Activated B cell treated with CpG ODN at 0.5 μM for 24 hours (primary cell): ENCODE measurements at regions of chrX and their contacts with region 1.

Region 1: DNA sequence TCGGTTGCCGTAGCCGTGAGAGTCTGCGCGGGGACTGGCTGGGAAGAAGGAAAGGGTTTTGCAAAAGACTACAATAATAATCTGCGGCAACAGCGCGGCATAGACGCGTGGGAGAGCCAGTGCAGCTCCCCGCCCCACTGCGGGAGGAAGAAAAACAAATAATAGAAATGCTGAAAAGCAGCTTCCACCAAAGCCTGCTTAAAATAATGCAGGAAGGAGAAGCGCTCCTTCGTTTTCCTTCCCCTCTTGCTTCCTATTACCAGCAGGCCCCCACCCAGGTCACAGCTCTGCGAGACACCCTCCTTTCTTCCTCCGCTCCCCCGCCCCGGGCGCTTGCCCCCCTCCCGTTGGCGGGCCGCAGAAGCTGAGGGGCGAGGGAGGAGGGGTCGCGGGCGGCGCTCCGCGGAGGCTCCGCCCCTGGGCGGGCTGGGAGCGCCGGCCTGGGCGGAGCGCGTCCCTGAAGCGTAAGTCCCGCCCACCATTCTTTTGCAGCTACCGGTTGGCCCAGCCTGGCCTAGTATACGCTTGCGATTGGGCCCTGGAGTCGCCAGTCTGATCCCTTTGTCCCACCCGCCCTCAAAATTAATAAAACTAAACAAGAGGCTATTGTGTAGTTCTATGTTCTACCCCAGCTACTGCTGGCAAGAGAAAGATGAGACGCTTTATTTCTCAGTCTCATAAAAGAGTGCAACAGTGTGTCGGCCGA is 636 bp upstream of the AMOT start:
- DNase-seq: peak; percentile 67
- ATAC-seq: peak; percentile 95
- H3K4me3 Mint-ChIP-seq: peak overlapping the region; percentile 90
- H3K27ac Mint-ChIP-seq: peak overlapping the region; percentile 77
- H3K4me1 Mint-ChIP-seq: peaks cover 8% of the 10 kb centered on the region
- H3K27me3 Mint-ChIP-seq: no peaks in the 10 kb centered on the region
- CTCF ChIP-seq: no peak

Region 2: DNA sequence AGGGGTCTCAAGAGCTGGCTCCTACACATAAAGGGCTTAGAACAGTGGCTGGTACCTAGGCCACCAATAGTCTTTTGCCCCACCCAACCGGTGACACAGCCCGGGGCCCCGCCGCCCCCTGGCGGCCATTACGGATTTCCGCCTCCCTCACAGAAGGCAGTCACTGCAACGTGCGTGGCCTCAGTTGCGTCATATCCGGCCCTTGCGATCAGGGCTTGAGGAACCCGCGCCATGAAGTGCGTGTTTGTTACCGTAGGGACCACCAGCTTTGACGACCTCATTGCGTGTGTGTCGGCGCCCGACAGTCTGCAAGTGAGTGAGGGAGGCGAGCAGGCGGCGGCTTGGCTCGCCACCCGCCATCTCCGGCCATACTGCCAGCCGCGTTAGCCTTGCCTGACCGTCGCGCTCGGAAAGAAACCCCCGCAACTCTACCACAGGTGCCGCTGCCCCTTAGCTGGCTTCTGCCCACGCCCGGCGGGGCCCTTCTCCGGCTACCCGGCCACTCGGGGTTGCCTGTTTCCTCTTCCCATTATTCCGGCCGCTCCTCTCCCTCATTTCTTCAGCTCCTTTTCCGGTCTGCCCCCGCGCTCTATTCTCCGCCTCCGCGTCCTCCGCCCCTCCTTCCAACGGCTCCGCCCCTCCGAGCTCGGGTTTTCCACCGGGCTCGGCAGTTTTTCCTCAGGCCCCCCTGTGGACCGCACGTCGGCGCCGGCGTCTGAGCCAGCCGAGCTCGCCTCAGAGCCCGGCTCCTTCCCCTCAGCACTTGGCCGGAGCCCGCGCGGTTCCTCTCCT is 1160.1 kb before region 1 on chrX and contains the start of gene ALG13:
- CTCF ChIA-PET with region 1: no interaction called
- POLR2A ChIA-PET with region 1: no interaction called
- intact Hi-C with region 1: loop called (anchors 2 kb)
- DNase-seq: peak; percentile 73
- ATAC-seq: peak; percentile 85
- H3K4me3 Mint-ChIP-seq: peak within 1 kb of the TSS; percentile 90
- H3K27ac Mint-ChIP-seq: peak within 1 kb of the TSS; percentile 96
- H3K4me1 Mint-ChIP-seq: peaks cover 28% of the 10 kb centered on the region
- H3K27me3 Mint-ChIP-seq: no peaks in the 10 kb centered on the region
- CTCF ChIP-seq: no peak
- total RNA-seq, gene ALG13: 63.4 and 84.2 TPM in 2 replicates

Region 3: DNA sequence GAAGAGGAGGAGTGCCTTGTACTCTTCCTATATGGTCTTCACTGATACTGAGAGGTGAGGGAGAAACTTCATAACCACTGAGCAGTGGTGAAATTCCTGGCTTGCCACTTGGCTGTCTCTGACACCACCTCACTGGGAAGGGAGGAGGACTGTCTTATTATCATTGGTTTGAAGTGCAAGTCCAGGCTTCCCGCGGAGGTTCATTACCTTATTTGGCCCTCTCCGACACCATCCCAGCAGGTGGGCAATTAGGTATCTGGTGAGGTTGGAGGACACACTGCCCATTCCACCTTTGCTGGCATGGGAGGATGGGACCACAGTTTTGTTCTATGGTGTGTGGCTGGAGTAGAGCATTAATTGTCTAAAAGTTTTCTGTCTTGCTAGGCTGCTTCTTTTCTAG is 367.6 kb before region 1 on chrX:
- CTCF ChIA-PET with region 1: no interaction called
- POLR2A ChIA-PET with region 1: no interaction called
- intact Hi-C with region 1: no loop called
- DNase-seq: no peak
- ATAC-seq: no peak
- H3K4me3 Mint-ChIP-seq: no peak overlapping the region
- H3K27ac Mint-ChIP-seq: no peak overlapping the region
- H3K4me1 Mint-ChIP-seq: no peaks in the 10 kb centered on the region
- H3K27me3 Mint-ChIP-seq: no peaks in the 10 kb centered on the region
- CTCF ChIP-seq: no peak

Region 4: DNA sequence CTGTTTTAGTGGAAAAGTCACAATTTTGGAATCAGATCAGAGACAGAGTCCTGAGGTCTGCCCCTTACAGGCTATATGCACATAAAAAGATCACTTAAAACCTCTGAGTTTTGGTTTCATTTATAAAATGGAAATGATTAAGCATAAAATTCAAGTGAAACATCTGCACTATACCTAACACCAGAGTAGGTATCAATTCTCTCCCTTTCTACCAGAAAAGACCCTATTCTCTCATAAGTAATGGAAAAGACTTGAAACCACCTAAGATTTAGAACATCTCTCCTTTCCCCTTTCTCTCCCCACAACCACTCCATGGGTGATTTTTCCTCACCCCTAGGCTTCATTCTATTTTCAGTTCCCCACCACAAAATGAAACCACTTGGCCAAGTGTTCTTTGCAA is 162.4 kb before region 1 on chrX:
- CTCF ChIA-PET with region 1: no interaction called
- POLR2A ChIA-PET with region 1: no interaction called
- intact Hi-C with region 1: loop called (anchors 5 kb)
- DNase-seq: no peak
- ATAC-seq: peak; percentile 37
- H3K4me3 Mint-ChIP-seq: peak overlapping the region; percentile 78
- H3K27ac Mint-ChIP-seq: peak overlapping the region; percentile 73
- H3K4me1 Mint-ChIP-seq: peaks cover 18% of the 10 kb centered on the region
- H3K27me3 Mint-ChIP-seq: no peaks in the 10 kb centered on the region
- CTCF ChIP-seq: no peak

Region 5: GRCh38 chrX:112760697-112761096 is 80.6 kb before region 1 on chrX:
- CTCF ChIA-PET with region 1: no interaction called
- POLR2A ChIA-PET with region 1: no interaction called
- intact Hi-C with region 1: loop called (anchors 1 kb)
- DNase-seq: no peak
- ATAC-seq: no peak
- H3K4me3 Mint-ChIP-seq: no peak overlapping the region
- H3K27ac Mint-ChIP-seq: no peak overlapping the region
- H3K4me1 Mint-ChIP-seq: peaks cover 19% of the 10 kb centered on the region
- H3K27me3 Mint-ChIP-seq: no peaks in the 10 kb centered on the region
- CTCF ChIP-seq: no peak

Region 6: DNA sequence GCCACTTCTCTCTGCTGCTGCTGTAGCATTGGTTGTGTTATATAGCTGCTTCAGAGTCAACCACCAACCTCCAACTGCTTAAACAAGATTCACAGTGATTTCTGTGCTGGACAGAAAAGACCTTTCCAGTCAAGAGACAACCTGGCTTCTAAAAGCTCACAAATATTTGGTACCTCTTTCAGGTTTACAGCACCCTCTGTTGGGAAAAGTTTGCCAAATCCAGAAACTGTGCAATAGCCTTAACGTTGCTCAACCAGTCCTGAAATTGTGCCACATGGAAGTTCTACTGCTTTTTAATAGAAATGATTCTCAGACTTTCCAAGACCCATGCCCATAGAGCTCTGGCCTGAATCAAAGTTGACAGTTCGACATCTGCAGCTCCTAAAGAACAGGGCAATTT is 900.5 kb after region 1 on chrX:
- CTCF ChIA-PET with region 1: no interaction called
- POLR2A ChIA-PET with region 1: no interaction called
- intact Hi-C with region 1: loop called (anchors 5 kb)
- DNase-seq: no peak
- ATAC-seq: no peak
- H3K4me3 Mint-ChIP-seq: no peak overlapping the region
- H3K27ac Mint-ChIP-seq: peak overlapping the region; percentile 61
- H3K4me1 Mint-ChIP-seq: peaks cover 53% of the 10 kb centered on the region
- H3K27me3 Mint-ChIP-seq: no peaks in the 10 kb centered on the region
- CTCF ChIP-seq: no peak